ENCODE measurements at regions of chr9 and their contacts with region 1.

Region 1: DNA sequence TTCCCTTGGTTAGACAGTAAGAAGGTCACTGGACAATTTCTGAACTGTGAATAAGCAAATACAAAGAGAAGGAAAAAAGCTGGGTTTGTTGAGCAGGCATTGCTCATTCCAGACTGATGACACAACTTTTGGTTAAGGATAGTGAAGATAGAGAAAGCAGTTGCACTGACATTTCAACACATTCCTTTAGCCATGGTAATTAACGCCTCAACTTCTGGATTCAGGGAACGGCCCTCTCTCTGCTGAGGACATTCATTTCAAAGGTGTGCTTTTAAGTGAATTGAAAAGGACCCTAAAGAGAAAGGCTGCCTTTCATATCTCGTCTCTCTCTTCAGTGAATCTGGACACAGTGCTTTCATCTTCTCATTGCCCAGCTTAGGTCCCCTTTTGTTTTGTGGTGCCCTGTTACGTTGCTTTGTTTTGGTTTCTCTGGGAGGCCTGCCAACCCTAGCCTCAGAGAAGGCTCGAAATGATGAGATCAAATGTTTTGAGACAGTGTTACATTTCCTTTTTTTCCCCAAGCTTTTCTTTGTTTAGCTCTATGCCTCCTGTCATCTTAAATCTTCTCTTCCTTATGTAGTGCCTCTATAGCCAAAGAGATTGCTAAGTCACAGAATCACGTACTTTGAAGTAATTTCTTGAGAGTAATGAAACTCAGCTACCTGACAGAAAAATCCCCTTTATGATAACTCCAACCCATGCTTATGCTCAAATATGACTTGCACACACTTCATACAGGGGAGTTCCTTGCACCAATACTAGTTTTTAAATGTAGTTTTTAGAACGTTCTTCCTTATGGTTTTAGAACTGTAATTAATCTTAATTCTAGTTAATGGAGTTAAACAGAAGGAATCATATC is 94.4 kb upstream of the IFNE start:
- DNase-seq: peak; percentile 74
- H3K4me3 Mint-ChIP-seq: peak overlapping the region; percentile 71
- H3K27ac Mint-ChIP-seq: peak overlapping the region; percentile 97
- H3K4me1 Mint-ChIP-seq: peaks cover 10% of the 10 kb centered on the region
- H3K27me3 Mint-ChIP-seq: no peaks in the 10 kb centered on the region
- CTCF ChIP-seq: no peak

Region 2: GRCh38 chr9:21591221-21592062 is 14.9 kb after region 1 on chr9:
- CTCF ChIA-PET with region 1: no interaction called
- POLR2A ChIA-PET with region 1: interaction called, 6 read pairs
- intact Hi-C with region 1: loop called (anchors 2 kb)
- DNase-seq: peak; percentile 89
- H3K4me3 Mint-ChIP-seq: peak overlapping the region; percentile 43
- H3K27ac Mint-ChIP-seq: peak overlapping the region; percentile 87
- H3K4me1 Mint-ChIP-seq: peaks cover 27% of the 10 kb centered on the region
- H3K27me3 Mint-ChIP-seq: no peaks in the 10 kb centered on the region
- CTCF ChIP-seq: no peak